MCF 10A (cell line): ENCODE measurements at regions of chr1 and their contacts with region 1.

Region 1: GRCh38 chr1:15788624-15789301 is 18.7 kb downstream of the UQCRHL start:
- DNase-seq: peak; percentile 76
- H3K4me3 Mint-ChIP-seq: no peak overlapping the region
- H3K27ac Mint-ChIP-seq: peak overlapping the region; percentile 76
- H3K4me1 Mint-ChIP-seq: peaks cover 26% of the 10 kb centered on the region
- H3K27me3 Mint-ChIP-seq: no peaks in the 10 kb centered on the region
- CTCF ChIP-seq: no peak

Region 2: GRCh38 chr1:15765495-15766194 is 23.1 kb before region 1 on chr1:
- CTCF ChIA-PET with region 1: interaction called, 8 read pairs
- POLR2A ChIA-PET with region 1: interaction called, 33 read pairs
- intact Hi-C with region 1: no loop called
- DNase-seq: peak; percentile 97
- H3K4me3 Mint-ChIP-seq: peak overlapping the region; percentile 52
- H3K27ac Mint-ChIP-seq: peak overlapping the region; percentile 52
- H3K4me1 Mint-ChIP-seq: peaks cover 26% of the 10 kb centered on the region
- H3K27me3 Mint-ChIP-seq: no peaks in the 10 kb centered on the region
- CTCF ChIP-seq: no peak

Region 3: DNA sequence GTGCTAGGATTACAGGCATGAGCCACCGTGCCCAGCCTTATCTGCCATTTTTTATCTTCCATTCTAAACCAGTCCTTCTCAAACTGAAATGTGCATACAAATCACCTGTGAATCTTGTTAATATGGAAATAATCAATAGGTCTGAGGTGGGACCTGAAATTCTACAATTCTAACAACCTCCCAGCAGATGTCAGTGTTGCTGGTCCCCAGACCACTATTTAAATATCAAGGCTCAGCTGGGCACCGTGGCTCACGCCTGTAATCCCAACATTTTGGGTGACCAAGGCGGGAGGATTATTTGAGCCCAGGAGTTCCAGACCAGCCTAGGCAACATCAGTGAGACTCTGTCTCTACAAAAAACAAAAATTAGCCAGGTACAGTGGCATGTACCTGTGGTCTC is 14.6 kb after region 1 on chr1:
- CTCF ChIA-PET with region 1: interaction called, 6 read pairs
- POLR2A ChIA-PET with region 1: interaction called, 21 read pairs
- intact Hi-C with region 1: no loop called
- DNase-seq: peak; percentile 54
- H3K4me3 Mint-ChIP-seq: no peak overlapping the region
- H3K27ac Mint-ChIP-seq: no peak overlapping the region
- H3K4me1 Mint-ChIP-seq: peaks cover 38% of the 10 kb centered on the region
- H3K27me3 Mint-ChIP-seq: no peaks in the 10 kb centered on the region
- CTCF ChIP-seq: peak; percentile 36

Region 4: GRCh38 chr1:15994590-15995351 is 206.0 kb after region 1 on chr1:
- CTCF ChIA-PET with region 1: interaction called, 17 read pairs
- POLR2A ChIA-PET with region 1: interaction called, 3 read pairs
- intact Hi-C with region 1: loop called (anchors 2 kb)
- DNase-seq: peak; percentile 77
- H3K4me3 Mint-ChIP-seq: no peak overlapping the region
- H3K27ac Mint-ChIP-seq: no peak overlapping the region
- H3K4me1 Mint-ChIP-seq: no peaks in the 10 kb centered on the region
- H3K27me3 Mint-ChIP-seq: no peaks in the 10 kb centered on the region
- CTCF ChIP-seq: peak; percentile 81

Region 5: GRCh38 chr1:16055613-16056520 is 267.1 kb after region 1 on chr1:
- CTCF ChIA-PET with region 1: interaction called, 3 read pairs
- POLR2A ChIA-PET with region 1: no interaction called
- intact Hi-C with region 1: loop called (anchors 2 kb)
- DNase-seq: peak; percentile 88
- H3K4me3 Mint-ChIP-seq: no peak overlapping the region
- H3K27ac Mint-ChIP-seq: no peak overlapping the region
- H3K4me1 Mint-ChIP-seq: peaks cover 5% of the 10 kb centered on the region
- H3K27me3 Mint-ChIP-seq: peaks cover 9% of the 10 kb centered on the region
- CTCF ChIP-seq: peak; percentile 93